Motor neuron (in vitro differentiated cells): ENCODE measurements at regions of chrX and their contacts with region 1.

Region 1: DNA sequence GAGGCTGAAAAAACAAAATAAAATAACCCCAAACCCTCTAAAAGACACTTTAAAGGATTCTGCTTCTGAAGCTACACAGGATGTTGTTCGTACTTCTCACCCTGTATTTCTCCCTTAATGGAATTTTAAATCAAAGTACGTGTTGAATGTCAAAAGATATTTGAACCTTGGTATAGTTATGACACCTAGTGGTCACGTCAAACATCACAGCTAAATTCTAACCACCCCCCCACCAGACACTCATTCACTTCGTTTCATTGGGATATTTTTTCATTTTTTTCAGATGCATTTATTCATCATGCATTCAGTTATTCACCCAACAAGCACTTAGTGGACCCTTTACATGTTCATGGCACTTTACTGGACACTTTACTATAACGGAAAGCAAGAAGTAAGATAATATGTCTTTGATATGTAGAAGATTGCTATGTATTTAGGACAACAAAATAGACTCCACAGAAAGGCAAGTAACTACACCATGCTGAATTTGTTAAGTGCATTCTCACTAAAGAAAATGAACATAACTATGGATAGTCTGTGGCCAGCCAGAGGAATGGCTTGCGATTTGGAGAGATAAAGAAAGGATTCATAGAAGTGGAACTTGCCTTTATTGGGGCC is 62.5 kb upstream of the GPR174 start:
- ATAC-seq: peak in 3 of 8 experiments; percentile 39 to 69 (median 47)
- H3K4me3 ChIP-seq: no peak overlapping the region
- H3K27ac ChIP-seq: no peak overlapping the region
- H3K4me1 ChIP-seq: no peaks in the 10 kb centered on the region

Region 2: GRCh38 chrX:78555401-78555980 is 526.5 kb before region 1 on chrX:
- in situ Hi-C with region 1: loop called in 1 of 9 experiments (anchors 25 kb)
- ATAC-seq: no peak
- H3K4me3 ChIP-seq: no peak overlapping the region
- H3K27ac ChIP-seq: no peak overlapping the region
- H3K4me1 ChIP-seq: no peaks in the 10 kb centered on the region

Region 3: DNA sequence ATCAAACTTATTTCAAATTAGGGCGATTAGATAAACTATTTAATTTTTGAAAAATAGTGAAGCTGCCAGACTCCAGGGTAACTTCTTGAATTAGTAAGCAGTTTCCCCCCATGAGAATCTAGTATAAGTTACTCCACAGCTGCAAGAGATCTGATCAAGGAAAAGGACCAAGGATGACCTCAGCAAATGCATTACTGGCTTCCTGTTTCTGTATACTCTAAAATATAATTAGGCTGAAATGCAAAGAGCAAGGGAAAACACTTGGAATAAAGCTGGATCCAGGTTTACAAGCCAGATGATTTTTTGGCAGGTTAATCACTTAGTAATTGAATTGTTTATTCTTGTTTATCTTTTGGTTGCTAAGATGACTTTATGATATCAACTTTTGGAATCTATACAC is 150.2 kb before region 1 on chrX:
- in situ Hi-C with region 1: no loop called
- ATAC-seq: no peak
- H3K4me3 ChIP-seq: no peak overlapping the region
- H3K27ac ChIP-seq: no peak overlapping the region
- H3K4me1 ChIP-seq: no peaks in the 10 kb centered on the region